ENCODE measurements at regions of chr3 and their contacts with region 1.

Region 1: GRCh38 chr3:159988617-159989271 is at the start of gene IL12A:
- DNase-seq: peak; percentile 88
- ATAC-seq: peak; percentile 86
- H3K4me3 ChIP-seq: peak within 1 kb of the TSS; percentile 82
- H3K27ac ChIP-seq: peak within 1 kb of the TSS; percentile 25
- H3K4me1 ChIP-seq: peaks cover 17% of the 10 kb centered on the region
- H3K27me3 ChIP-seq: no peaks in the 10 kb centered on the region
- CTCF ChIP-seq: peak; percentile 98
- total RNA-seq, gene IL12A: 6.5 and 8.3 TPM in 2 replicates

Region 2: GRCh38 chr3:159964166-159964973 is 24.4 kb before region 1 on chr3:
- CTCF ChIA-PET with region 1: no interaction called
- POLR2A ChIA-PET with region 1: interaction called, 3 read pairs
- intact Hi-C with region 1: loop called (anchors 2 kb)
- DNase-seq: peak; percentile 94
- ATAC-seq: peak; percentile 99
- H3K4me3 ChIP-seq: peak overlapping the region; percentile 30; the same call in 1 of the 2 replicates
- H3K27ac ChIP-seq: peak overlapping the region; percentile 76
- H3K4me1 ChIP-seq: peaks cover 22% of the 10 kb centered on the region
- H3K27me3 ChIP-seq: no peaks in the 10 kb centered on the region
- CTCF ChIP-seq: no peak

Region 3: DNA sequence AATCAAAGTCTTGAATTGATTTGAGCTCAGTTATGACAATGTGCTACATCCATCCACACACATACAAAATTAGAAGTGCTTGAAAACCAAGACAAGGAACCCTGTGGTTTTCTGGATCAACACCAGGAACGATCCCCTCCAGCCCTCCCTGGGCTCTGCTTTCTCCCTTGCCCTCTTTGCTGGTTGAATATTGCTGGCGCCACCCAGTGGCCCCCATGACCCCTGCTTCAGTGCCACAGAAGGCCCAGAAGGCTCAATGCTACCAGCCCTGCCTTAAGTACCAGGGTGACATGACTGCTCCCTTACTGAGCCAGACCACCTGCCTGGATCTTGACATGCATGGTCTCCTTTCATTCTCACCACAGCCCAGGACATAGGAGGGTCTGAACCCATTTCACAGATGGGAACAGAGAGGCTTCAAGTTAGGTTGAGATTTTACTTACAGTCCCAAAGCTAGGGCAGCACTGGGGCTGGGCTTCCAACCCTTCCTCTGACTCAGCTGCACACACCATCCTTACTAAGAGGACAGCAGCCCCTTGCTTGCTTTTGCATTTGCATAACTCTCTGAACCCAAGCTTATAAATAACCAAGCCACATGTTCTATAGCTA is 14.9 kb after region 1 on chr3:
- CTCF ChIA-PET with region 1: interaction called, 27 read pairs
- POLR2A ChIA-PET with region 1: no interaction called
- intact Hi-C with region 1: loop called (anchors 1 kb)
- DNase-seq: peak; percentile 78
- ATAC-seq: peak; percentile 82
- H3K4me3 ChIP-seq: no peak overlapping the region
- H3K27ac ChIP-seq: no peak overlapping the region
- H3K4me1 ChIP-seq: no peaks in the 10 kb centered on the region
- H3K27me3 ChIP-seq: no peaks in the 10 kb centered on the region
- CTCF ChIP-seq: peak; percentile 87

Measured in PC-3 (cell line).